ENCODE measurements at regions of chr20 and their contacts with region 1.

Region 1: GRCh38 chr20:35741892-35742740 is at the start of gene RBM39:
- DNase-seq: peak; percentile 100
- H3K4me3 Mint-ChIP-seq: peak within 1 kb of the TSS; percentile 98
- H3K27ac Mint-ChIP-seq: peak within 1 kb of the TSS; percentile 99
- H3K4me1 Mint-ChIP-seq: peaks cover 43% of the 10 kb centered on the region
- H3K27me3 Mint-ChIP-seq: no peaks in the 10 kb centered on the region
- total RNA-seq, gene RBM39: 318 to 331 TPM

Region 2: GRCh38 chr20:35454881-35455609 is 287.1 kb before region 1 on chr20 and contains the start of gene CEP250:
- CTCF ChIA-PET with region 1: interaction called, 4 read pairs
- POLR2A ChIA-PET with region 1: interaction called, 19 read pairs
- DNase-seq: peak; percentile 94
- H3K4me3 Mint-ChIP-seq: peak within 1 kb of the TSS; percentile 87
- H3K27ac Mint-ChIP-seq: peak within 1 kb of the TSS; percentile 95
- H3K4me1 Mint-ChIP-seq: peaks cover 29% of the 10 kb centered on the region
- H3K27me3 Mint-ChIP-seq: no peaks in the 10 kb centered on the region
- total RNA-seq, gene CEP250: 70.3 to 71.2 TPM

Region 3: GRCh38 chr20:35648836-35649235 is 93.3 kb before region 1 on chr20:
- CTCF ChIA-PET with region 1: no interaction called
- POLR2A ChIA-PET with region 1: no interaction called
- DNase-seq: no peak
- H3K4me3 Mint-ChIP-seq: no peak overlapping the region
- H3K27ac Mint-ChIP-seq: no peak overlapping the region
- H3K4me1 Mint-ChIP-seq: peaks cover 38% of the 10 kb centered on the region
- H3K27me3 Mint-ChIP-seq: no peaks in the 10 kb centered on the region

Region 4: GRCh38 chr20:35664544-35665221 is 77.4 kb before region 1 on chr20 and contains the starts of genes CPNE1 and RBM12:
- CTCF ChIA-PET with region 1: no interaction called
- POLR2A ChIA-PET with region 1: interaction called, 97 read pairs
- DNase-seq: peak; percentile 95
- H3K4me3 Mint-ChIP-seq: peak within 1 kb of the TSS; percentile 95
- H3K27ac Mint-ChIP-seq: peak within 1 kb of the TSS; percentile 98
- H3K4me1 Mint-ChIP-seq: peaks cover 46% of the 10 kb centered on the region
- H3K27me3 Mint-ChIP-seq: no peaks in the 10 kb centered on the region
- total RNA-seq, gene CPNE1: 239 to 243 TPM
- total RNA-seq, gene RBM12: 115 to 116 TPM

Region 5: DNA sequence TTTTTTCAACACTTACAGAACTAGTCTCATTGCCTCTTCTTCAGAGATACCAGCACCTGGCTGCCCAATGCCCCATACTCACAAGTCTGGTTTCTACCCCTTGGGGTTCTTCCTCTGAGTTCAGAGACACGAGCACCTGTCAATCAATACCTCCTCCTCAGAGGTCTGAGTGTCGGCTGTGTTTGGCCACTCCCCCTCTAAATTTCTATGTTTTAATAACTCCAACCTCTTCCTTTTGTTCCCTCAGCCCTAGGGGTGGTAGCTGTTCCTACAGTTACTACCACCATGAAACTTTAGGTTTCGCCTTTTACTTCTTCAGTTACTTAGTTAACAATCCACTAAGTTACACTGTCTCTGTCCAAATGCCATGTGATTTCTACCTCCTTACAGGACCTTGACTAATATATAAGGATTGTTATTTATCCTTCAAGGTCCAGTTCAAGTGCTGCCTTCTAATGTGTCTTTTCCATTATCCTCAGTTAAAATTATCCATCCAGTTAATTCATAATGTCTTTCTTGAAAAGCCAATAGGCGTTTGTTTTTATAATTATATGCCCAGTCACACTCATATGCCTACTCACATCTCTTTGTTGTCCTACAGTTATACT is 15.1 kb after region 1 on chr20:
- CTCF ChIA-PET with region 1: interaction called, 4 read pairs
- POLR2A ChIA-PET with region 1: interaction called, 21 read pairs
- DNase-seq: no peak
- H3K4me3 Mint-ChIP-seq: no peak overlapping the region
- H3K27ac Mint-ChIP-seq: no peak overlapping the region
- H3K4me1 Mint-ChIP-seq: no peaks in the 10 kb centered on the region
- H3K27me3 Mint-ChIP-seq: peaks cover 4% of the 10 kb centered on the region

Region 6: DNA sequence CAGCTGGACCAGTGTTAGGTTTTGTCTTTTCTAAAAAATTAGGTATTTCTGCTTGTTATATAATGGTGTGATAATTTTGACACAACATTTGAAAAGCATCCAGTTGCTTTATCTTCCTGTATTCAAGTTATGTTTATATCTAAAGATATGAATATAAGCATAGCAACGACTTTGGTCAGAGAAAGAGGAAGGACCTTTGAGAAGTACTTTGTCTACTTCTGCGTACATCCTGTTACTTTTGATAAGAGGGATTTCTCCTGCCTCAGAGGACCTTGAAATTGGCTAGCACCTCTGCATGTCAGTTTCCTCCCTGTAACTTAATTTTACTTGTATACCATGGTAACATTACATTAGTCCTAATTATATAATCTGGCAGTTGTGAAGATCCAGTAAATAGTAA is 54.5 kb after region 1 on chr20:
- CTCF ChIA-PET with region 1: no interaction called
- POLR2A ChIA-PET with region 1: interaction called, 19 read pairs
- DNase-seq: no peak
- H3K4me3 Mint-ChIP-seq: no peak overlapping the region
- H3K27ac Mint-ChIP-seq: no peak overlapping the region
- H3K4me1 Mint-ChIP-seq: peaks cover 13% of the 10 kb centered on the region
- H3K27me3 Mint-ChIP-seq: no peaks in the 10 kb centered on the region

Region 7: GRCh38 chr20:37095599-37096414 is 1353.7 kb after region 1 on chr20 and contains the start of gene RBL1:
- CTCF ChIA-PET with region 1: no interaction called
- POLR2A ChIA-PET with region 1: interaction called, 14 read pairs
- DNase-seq: peak; percentile 89
- H3K4me3 Mint-ChIP-seq: peak within 1 kb of the TSS; percentile 95
- H3K27ac Mint-ChIP-seq: peak within 1 kb of the TSS; percentile 99
- H3K4me1 Mint-ChIP-seq: peaks cover 48% of the 10 kb centered on the region
- H3K27me3 Mint-ChIP-seq: peaks cover 2% of the 10 kb centered on the region
- total RNA-seq, gene RBL1: 45.2 to 45.6 TPM

Measured in activated CD4-positive, alpha-beta memory T cell treated with anti-CD3 and anti-CD28 coated beads, Interleukin-2, amount 10 ng/mL, durations not matched to agents 7 days and 5 days (primary cell).